ENCODE measurements at regions of chr5 and their contacts with region 1.

Region 1: GRCh38 chr5:80960531-80961375 is 590 bp downstream of the RASGRF2 start:
- DNase-seq: no peak

Region 2: GRCh38 chr5:80034962-80035821 is 925.6 kb before region 1 on chr5 and contains the start of gene THBS4:
- intact Hi-C with region 1: loop called in 1 of 2 experiments (anchors 5 kb)
- DNase-seq: no peak
- total RNA-seq, gene THBS4: 58.2 to 80.2 TPM

Region 3: GRCh38 chr5:80884929-80885328 is 75.8 kb before region 1 on chr5:
- intact Hi-C with region 1: no loop called
- DNase-seq: no peak

Measured in posterior vena cava (tissue), 2 donors.